ENCODE measurements at regions of chr14 and their contacts with region 1.

Region 1: DNA sequence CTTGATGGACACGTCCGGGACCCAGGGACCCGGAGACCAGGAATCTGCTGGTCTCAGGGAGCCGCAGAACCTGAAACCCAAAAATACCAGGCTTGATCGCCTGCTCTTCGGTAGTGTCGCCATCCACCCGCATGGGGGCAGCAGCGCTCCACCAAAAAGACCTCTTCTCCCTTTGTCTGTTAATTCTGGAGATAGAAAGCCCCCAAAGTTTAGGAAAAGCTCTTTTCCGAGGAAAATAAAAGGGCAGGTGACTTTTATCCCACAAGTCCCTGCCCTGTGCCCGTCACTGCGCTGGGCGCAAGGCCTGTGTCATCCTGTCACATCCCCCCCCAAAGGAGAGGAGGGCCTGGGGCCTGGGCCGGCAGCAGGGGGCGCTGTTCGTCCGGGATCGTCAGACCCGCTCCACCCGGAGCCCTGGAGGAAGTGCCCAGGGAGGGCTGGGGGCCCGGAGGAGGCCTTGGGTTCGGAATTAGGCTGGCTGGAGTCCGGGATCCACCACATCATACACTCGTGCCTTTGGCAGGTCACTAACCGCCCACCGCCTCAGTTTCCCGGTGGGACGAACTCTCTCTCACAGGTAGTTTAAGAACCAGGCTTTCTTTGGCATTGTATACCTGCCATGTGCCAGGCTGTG is 31.9 kb downstream of the DAD1 start:
- DNase-seq: peak; percentile 63 to 98 (median 81)

Region 2: GRCh38 chr14:22344673-22345072 is 212.4 kb before region 1 on chr14:
- intact Hi-C with region 1: no loop called
- DNase-seq: no peak

Region 3: GRCh38 chr14:22386924-22387775 is 170.0 kb before region 1 on chr14:
- intact Hi-C with region 1: loop called (anchors 10 kb)
- DNase-seq: peak in 8 of 10 donors; percentile 46 to 90 (median 72)

Region 4: DNA sequence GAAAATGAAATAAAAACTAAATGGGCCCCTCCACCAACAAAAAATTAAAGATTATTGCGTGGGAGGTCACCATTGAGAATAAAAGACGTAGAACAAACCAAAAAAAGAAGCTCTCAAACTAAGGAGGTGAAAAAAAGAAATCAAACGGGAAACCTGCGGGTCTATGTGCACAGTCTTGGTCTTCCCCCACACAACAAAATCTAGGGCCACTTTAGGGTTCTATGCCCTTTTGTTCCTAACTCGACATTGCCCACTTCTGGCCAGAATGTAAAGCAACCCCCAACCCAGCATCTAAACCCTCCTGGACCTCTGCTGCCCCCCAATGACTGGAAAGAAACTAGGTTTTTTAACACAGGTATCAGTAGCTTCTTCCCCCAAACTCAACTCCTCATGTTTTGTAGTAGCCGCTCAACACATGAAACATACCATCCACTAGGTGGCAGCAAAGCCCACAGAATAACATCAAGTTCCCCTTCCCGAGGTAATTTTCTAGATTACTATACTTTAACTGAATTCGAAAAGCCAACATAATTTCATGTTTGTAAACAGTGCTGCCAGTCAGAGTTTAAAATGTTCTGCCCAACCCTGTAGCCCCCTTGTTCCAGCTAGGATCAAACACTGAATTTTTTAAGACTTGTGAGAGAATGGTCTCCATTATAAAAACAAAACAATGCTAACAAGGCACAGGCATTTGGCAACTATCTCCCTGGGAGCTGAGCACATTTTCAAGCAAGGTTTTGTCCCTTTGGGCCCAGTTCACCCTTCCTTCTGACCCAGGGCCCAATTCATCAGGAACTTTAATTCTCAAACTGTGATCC is 13.2 kb after region 1 on chr14:
- intact Hi-C with region 1: no loop called
- DNase-seq: peak in 6 of 10 donors; percentile 40 to 81 (median 66)

Region 5: DNA sequence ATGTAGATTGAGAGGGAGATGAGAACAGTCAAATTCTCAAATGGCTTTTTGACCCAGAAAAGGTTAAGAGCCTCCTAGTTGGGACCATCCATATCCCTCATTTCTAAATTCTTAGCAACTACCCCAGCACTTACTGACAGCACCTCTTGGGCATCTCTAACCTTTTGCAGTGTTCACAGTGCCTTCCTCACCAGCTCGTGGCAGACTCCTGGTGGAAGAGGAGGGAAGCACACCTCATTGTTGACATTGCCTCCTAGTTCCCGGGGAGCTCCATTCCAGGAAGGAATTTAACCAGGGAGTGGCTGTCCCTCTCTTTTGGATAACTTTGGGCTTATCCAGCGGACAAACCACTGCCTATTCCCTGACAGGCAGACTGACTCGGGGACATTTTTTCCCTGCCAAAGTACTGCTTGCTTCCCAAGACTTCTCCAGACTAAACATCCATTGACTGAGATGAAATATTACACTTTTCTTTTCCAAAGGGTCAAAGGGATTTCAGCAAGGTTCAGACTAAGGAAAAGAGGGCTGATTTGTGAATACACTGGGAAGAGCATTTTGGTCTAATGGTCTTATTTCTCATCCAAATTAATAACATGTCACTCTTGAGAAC is 96.0 kb after region 1 on chr14:
- intact Hi-C with region 1: loop called (anchors 1 kb)
- DNase-seq: peak in 5 of 10 donors; percentile 16 to 72 (median 29)

Measured in posterior cingulate gyrus (tissue), 11 donors.